Right ventricle myocardium inferior (tissue), 1 donor: ENCODE measurements at regions of chr22 and their contacts with region 1.

Region 1: DNA sequence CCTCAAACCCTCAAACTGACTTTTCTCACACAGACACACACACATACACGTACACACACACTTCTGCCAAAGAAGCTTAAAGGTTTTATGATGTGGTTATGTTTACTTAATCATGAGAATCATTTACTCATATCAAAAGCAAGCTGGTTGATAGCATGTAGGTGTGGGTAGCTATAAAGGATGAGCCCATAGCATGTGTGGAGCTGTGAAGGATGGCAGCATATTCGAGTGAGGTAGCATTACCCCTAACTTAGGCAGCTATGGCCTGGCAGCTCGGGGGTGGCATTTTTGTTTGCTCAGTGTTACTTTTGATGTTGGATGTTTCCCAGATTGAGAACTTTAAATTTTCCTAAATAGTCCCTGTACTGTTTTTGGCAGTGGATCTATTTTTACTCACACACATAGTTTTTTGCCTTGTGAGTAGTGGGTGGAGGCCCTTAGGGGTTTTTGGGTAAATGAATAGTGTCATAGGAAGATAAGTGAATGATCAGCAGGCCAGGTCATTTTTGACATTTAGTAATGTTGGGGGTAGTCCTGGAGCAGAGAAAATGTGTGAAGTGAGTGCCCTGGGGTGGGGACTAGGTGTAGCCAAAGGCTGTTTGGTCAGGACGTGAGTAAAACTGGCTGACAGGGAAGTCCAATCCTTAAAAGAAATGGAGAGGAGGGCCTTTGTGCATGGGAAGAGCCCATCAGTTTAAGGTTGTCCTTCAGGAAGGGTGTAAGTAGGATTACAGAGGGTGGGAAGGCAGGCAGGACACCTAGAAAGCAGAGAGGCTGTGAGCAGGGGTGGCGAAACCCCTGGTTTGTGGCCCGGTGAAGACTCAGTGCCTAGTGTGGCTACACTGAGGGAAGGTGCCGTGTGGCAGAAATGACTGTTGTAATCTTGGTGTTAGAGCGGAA is 7.1 kb downstream of the YWHAH start:
- DNase-seq: no peak
- ATAC-seq: no peak

Region 2: DNA sequence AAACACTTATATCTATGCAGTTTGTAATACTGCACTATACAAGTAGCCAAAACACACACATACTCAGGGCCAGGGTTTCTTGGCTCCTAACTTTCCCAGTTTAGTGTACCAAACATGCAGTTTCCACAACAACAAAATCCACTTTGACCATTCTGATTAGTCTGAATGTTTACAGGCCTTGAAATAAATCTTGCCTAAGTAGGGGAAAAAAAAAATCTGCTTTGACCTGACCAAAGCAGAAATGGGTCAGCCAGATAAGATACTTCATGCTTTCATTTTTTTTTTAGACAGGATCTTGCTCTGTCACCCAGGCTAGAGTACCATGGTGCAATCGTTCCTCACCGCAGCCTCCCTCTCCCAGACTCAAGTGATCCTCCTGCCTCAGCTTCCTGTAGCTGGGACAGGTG is 211.6 kb before region 1 on chr22:
- intact Hi-C with region 1: no loop called
- DNase-seq: no peak
- ATAC-seq: peak; percentile 66

Region 3: DNA sequence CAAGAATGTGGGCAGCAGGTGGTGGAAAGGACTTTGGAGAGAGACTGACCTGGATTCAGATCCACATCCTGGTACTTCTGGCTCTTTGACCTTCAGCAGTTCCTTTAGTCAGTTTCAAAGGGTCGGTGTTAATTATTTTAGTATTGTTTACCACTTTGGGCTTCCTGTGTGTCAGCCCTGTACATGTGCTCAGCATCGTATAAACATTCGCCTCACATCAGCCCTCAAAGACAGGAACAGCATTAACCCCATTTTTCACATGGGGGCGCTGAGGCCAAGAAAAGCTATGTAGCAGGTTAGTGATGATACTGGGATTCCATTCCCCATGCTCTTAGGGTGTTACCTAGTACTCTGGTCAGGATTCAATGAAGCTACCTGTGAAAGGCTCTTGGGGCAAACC is 79.2 kb before region 1 on chr22:
- intact Hi-C with region 1: loop called (anchors 2 kb)
- DNase-seq: no peak
- ATAC-seq: no peak

Region 4: GRCh38 chr22:31983911-31984656 is 32.6 kb after region 1 on chr22:
- intact Hi-C with region 1: no loop called
- DNase-seq: no peak
- ATAC-seq: no peak

Region 5: GRCh38 chr22:32528984-32529982 is 577.8 kb after region 1 on chr22:
- intact Hi-C with region 1: no loop called
- DNase-seq: peak; percentile 92
- ATAC-seq: peak; percentile 77